T-cell (primary cell): ENCODE measurements at regions of chr9 and their contacts with region 1.

Region 1: GRCh38 chr9:98022447-98022846 is 34.1 kb upstream of the NANS start:
- DNase-seq: no peak
- ATAC-seq: no peak
- H3K4me3 ChIP-seq: no peak overlapping the region
- H3K4me3 Mint-ChIP-seq: no peak overlapping the region
- H3K27ac ChIP-seq: no peak overlapping the region
- H3K27ac Mint-ChIP-seq: no peak overlapping the region
- H3K4me1 ChIP-seq: no peaks in the 10 kb centered on the region
- H3K4me1 Mint-ChIP-seq: peaks cover 0 to 10% (median 0%) of the 10 kb centered on the region in 3 donors
- H3K27me3 ChIP-seq: no peaks in the 10 kb centered on the region
- H3K27me3 Mint-ChIP-seq: no peaks in the 10 kb centered on the region

Region 2: DNA sequence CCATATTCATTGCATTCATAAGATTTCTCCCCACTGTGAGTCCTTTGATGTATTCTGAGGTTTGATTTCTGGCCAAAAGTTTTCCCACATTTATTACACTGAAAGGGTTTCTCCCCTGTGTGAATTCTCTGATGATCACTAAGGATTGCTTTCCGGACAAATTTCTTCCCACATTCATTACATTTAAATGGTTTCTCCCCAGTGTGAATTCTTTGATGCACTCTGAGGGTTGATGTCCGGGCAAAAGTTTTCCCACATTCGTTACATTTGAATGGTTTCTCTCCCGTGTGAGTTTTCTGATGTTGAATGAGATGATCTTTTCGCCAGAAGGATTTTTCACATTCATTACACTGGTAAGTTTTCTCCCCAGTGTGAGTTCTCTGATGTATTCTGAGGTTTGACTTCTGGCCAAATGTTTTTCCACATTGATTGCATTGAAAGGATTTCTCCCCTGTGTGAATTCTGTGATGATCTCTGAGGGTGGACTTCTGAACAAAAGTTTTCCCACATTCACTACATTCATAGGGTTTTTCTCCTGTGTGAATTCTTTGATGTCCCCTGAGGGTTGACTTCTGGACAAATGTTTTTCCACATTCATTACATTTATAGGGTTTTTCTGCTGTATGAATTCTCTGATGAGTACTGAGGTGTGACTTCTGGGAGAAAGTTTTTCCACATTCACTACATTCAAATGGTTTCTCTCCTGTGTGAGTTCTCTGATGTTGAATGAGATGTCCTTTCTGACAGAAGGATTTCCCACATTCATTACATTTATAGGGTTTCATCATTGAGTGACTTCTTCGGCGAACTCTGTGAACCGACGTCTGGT is 1263.4 kb before region 1 on chr9:
- CTCF ChIA-PET with region 1: no interaction called
- POLR2A ChIA-PET with region 1: no interaction called
- DNase-seq: no peak
- ATAC-seq: no peak
- H3K4me3 ChIP-seq: peak overlapping the region in 1 of 2 donors; percentile 6
- H3K4me3 Mint-ChIP-seq: peak overlapping the region in 1 of 3 donors; percentile 21
- H3K27ac ChIP-seq: no peak overlapping the region
- H3K27ac Mint-ChIP-seq: no peak overlapping the region
- H3K4me1 ChIP-seq: no peaks in the 10 kb centered on the region
- H3K4me1 Mint-ChIP-seq: no peaks in the 10 kb centered on the region
- H3K27me3 ChIP-seq: no peaks in the 10 kb centered on the region
- H3K27me3 Mint-ChIP-seq: no peaks in the 10 kb centered on the region

Region 3: GRCh38 chr9:97802276-97802675 is 220.2 kb before region 1 on chr9:
- CTCF ChIA-PET with region 1: no interaction called
- POLR2A ChIA-PET with region 1: no interaction called
- DNase-seq: no peak
- ATAC-seq: no peak
- H3K4me3 ChIP-seq: no peak overlapping the region
- H3K4me3 Mint-ChIP-seq: peak overlapping the region; percentile 71 to 80 (median 75)
- H3K27ac ChIP-seq: no peak overlapping the region
- H3K27ac Mint-ChIP-seq: peak overlapping the region in 1 of 2 donors; percentile 6
- H3K4me1 ChIP-seq: peaks cover 0 to 12% of the 10 kb centered on the region in 2 experiments
- H3K4me1 Mint-ChIP-seq: peaks cover 5 to 20% (median 10%) of the 10 kb centered on the region in 3 donors
- H3K27me3 ChIP-seq: peaks cover 6 to 14% of the 10 kb centered on the region in 2 experiments
- H3K27me3 Mint-ChIP-seq: peaks cover 12 to 19% of the 10 kb centered on the region in 2 donors

Region 4: DNA sequence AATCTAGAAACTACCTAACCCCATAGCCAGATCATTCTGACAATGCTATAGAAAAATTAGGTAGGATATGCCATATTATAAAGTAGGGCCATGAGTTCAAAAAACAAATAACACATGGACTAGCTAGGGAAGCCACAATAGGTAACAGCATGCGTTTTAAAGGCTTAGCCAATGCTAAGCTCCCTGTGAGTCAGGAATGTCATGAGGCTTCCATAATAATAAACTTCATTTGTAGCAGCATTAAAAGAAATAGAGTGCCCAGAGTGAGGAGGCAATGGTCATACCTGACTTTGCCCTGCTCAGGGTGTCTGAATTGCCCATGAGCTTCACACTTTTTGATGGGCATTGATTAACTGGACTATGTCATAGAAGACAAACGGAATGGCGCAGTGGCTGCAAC is 153.6 kb before region 1 on chr9:
- CTCF ChIA-PET with region 1: interaction called in 1 of 2 experiments, 10 read pairs
- POLR2A ChIA-PET with region 1: no interaction called
- DNase-seq: no peak
- ATAC-seq: no peak
- H3K4me3 ChIP-seq: no peak overlapping the region
- H3K4me3 Mint-ChIP-seq: no peak overlapping the region
- H3K27ac ChIP-seq: no peak overlapping the region
- H3K27ac Mint-ChIP-seq: no peak overlapping the region
- H3K4me1 ChIP-seq: no peaks in the 10 kb centered on the region
- H3K4me1 Mint-ChIP-seq: no peaks in the 10 kb centered on the region
- H3K27me3 ChIP-seq: peaks cover 2 to 12% of the 10 kb centered on the region in 2 experiments
- H3K27me3 Mint-ChIP-seq: peaks cover 22 to 33% of the 10 kb centered on the region in 2 donors

Region 5: GRCh38 chr9:98101868-98102273 is 79.4 kb after region 1 on chr9:
- CTCF ChIA-PET with region 1: interaction called in 1 of 2 experiments, 3 read pairs
- POLR2A ChIA-PET with region 1: interaction called, 3 to 18 read pairs
- DNase-seq: peak; percentile 49 to 95 (median 83)
- ATAC-seq: peak; percentile 95 to 97 (median 96)
- H3K4me3 ChIP-seq: peak overlapping the region in 1 of 2 donors; percentile 13
- H3K4me3 Mint-ChIP-seq: peak overlapping the region; percentile 65 to 74 (median 69)
- H3K27ac ChIP-seq: peak overlapping the region; percentile 77
- H3K27ac Mint-ChIP-seq: peak overlapping the region; percentile 95 to 99
- H3K4me1 ChIP-seq: peaks cover 67 to 92% of the 10 kb centered on the region in 2 experiments
- H3K4me1 Mint-ChIP-seq: peaks cover 86 to 95% (median 86%) of the 10 kb centered on the region in 3 donors
- H3K27me3 ChIP-seq: no peaks in the 10 kb centered on the region
- H3K27me3 Mint-ChIP-seq: no peaks in the 10 kb centered on the region